Activated CD4-positive, alpha-beta T cell treated with anti-CD3 and anti-CD28 coated beads for 36 hours (primary cell): ENCODE measurements at regions of chr1 and their contacts with region 1.

Region 1: GRCh38 chr1:189859385-189859977 is 618.2 kb downstream of the BRINP3 start:
- DNase-seq: peak; percentile 58
- ATAC-seq: no peak
- H3K4me3 Mint-ChIP-seq: no peak overlapping the region
- H3K27ac Mint-ChIP-seq: no peak overlapping the region
- H3K4me1 Mint-ChIP-seq: no peaks in the 10 kb centered on the region
- H3K27me3 Mint-ChIP-seq: no peaks in the 10 kb centered on the region

Region 2: DNA sequence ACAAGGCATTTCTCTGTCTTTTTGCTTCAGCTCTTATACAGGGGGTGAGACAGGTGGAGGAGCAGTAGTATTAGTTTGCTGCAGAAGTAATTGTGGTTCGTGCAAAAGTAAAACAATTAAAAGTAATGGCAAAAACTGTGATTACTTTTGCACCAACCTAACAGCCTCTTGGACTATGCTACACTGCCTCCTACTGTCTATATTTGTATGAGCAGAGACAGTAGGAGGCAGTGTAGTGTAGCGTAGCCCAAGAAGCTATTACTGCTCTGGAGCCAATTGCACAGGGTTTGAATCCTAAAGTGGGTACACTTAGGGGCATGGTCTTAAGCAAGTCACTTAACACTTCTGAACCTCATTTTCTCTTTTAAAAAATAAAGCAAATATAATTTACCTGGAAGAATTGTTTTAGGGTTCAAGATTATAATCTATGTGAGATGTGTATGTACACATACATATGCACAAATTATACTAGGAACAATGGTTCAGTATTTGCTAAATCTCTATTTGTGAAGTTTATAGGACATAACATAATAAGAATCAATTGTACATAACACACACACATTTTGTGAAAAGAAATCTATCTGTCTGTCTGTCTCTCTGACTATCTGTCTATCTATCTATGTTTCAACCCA is 514.3 kb after region 1 on chr1:
- CTCF ChIA-PET with region 1: no interaction called
- POLR2A ChIA-PET with region 1: no interaction called
- intact Hi-C with region 1: loop called in 1 of 2 experiments (anchors 5 kb)
- DNase-seq: no peak
- ATAC-seq: no peak
- H3K4me3 Mint-ChIP-seq: no peak overlapping the region
- H3K27ac Mint-ChIP-seq: no peak overlapping the region
- H3K4me1 Mint-ChIP-seq: no peaks in the 10 kb centered on the region
- H3K27me3 Mint-ChIP-seq: no peaks in the 10 kb centered on the region

Region 3: GRCh38 chr1:190897233-190897632 is 1037.8 kb after region 1 on chr1:
- CTCF ChIA-PET with region 1: no interaction called
- POLR2A ChIA-PET with region 1: no interaction called
- intact Hi-C with region 1: no loop called
- DNase-seq: no peak
- ATAC-seq: no peak
- H3K4me3 Mint-ChIP-seq: no peak overlapping the region
- H3K27ac Mint-ChIP-seq: no peak overlapping the region
- H3K4me1 Mint-ChIP-seq: no peaks in the 10 kb centered on the region
- H3K27me3 Mint-ChIP-seq: no peaks in the 10 kb centered on the region